ENCODE measurements at regions of chr15 and their contacts with region 1.

Region 1: DNA sequence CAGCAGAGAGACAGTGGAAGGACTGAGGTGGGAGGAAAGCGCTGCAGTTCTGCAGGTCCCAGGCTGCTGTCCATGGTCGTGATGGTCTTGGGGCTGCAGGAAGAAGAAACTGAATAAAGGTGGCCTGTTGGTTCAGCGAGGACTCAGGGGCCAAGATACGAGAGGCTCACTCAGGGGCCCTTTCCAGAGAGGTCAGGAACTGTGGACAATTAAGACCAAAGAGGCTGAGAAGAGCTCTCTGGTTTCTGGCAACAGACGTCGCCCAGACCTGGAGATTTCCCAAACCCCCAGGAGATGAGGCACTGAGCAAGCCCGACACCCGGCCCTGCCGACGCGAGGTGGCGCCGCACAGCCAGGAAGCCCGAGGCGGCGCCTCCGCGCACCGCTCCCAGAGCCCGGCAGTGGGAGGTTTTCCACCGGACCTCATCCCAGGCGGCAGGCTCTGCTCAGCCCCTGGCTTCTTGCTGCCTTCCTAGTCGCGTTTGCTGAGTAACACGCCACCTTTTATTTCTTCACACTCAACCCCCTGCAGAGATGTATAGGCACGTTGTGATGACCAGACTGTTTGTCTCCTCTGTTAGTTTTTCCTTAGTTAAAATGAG is 56.4 kb upstream of the ARRDC4 start:
- DNase-seq: peak; percentile 90

Region 2: GRCh38 chr15:97612062-97612461 is 292.0 kb before region 1 on chr15:
- intact Hi-C with region 1: no loop called
- DNase-seq: no peak

Region 3: DNA sequence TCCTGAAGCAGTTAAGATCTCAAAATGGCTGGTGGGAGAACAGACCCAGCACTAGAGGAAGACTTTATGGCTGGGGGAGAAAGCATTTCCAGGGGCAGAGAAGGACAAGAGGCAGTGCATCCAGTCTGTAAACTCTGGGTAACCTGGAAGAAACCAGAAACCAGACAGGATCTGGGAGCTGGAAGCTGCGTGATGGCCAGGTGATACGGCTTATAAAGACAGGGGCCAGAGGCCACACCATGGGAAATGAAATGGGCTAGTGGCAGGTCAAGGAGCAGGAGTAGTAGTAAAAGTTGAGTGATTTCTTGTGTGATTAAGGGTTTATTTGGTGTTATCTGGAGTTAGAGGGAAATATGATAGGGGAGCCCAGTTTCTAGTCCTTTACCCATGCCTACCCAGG is 88.2 kb before region 1 on chr15:
- intact Hi-C with region 1: no loop called
- DNase-seq: no peak

Region 4: DNA sequence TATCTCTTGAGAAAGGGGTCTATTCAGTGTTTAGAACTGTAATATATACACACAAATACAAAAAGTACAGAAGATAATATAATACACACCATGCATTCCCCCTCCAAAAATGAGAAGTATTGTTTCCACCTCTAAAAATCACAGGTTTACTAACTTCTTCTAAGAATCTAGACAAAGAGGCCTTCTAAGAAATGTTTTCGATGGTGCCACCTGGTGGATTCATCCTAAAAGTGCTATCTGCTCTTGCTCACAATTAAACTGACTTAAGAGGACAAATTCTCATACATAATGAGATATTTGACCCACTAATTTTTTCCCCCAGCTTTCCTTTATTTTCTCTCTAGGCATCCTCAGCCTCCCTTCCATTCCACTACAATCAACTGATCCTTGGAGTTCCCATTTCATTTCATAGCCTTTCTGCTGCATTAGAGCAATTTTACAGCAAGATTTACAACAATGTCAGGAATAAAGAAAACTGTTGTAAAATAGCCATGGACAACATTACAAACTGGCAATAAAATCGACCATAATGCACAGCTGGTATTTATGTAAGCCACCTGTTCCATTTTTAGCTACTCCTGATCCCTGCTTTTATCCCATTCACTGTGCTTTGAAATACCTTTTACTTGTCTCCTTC is 181.0 kb after region 1 on chr15:
- intact Hi-C with region 1: loop called in 1 of 2 experiments (anchors 5 kb)
- DNase-seq: no peak

Region 5: DNA sequence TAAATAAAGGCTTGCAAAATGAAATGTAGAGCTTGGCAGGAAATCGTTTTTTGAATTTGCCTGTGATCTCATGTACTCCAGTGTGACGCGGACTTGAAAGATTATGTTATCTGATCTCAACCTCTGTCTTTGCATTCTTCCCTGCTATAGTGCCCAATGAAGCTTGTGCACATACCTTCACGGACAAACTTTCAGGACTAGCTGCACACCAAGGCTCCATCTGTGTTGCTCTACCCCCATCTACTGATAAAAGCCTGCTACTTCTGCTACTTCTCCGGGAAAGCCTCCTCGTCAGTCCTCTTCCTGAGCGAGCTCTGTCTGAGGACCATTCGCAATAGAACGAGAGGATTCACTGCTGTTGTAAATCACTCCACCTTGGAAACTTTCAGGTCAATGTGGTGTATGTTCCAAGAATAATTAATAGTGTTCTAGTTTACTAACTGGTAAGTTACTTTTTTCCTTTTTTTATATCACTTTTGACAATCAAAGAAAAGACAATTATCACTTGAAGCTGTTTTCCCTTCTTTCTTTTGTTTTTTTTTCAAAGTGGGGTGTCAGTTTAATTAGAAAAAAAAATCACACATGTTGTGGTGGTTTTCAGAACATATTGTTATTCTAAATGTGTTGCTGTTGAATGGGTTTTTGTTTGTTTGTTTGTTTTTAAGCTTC is 274.0 kb after region 1 on chr15:
- intact Hi-C with region 1: loop called (anchors 5 kb)
- DNase-seq: no peak

Region 6: DNA sequence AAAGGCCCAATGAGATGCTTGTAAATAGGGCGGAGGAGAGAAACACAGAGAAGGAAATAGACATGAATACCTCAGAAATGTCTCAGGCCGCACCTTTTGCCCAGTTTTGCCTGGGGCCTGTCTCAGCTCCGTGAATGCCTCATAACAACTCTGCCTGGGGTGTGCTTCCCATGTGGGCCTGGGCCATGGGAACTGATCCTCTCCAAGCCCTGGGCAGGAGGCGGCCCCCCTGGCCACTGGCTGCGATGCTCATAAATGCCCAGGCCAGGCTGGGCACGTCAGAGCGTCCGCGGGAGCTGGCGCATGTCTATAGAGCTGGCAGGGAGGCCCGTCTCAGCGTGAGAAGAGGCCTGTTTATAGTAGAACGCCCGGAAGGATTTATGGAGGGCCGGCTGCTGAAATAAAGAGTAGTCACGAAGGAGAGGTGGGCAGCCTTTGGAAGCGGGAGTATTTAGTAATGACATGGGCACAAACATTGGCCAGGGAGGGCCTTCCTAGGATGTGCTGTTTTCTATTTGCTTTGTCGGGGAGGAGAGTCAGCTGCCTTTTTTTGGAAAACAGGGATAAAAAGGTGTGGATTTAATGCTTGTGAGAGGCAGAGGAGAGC is 658.4 kb after region 1 on chr15:
- intact Hi-C with region 1: no loop called
- DNase-seq: peak; percentile 69